ENCODE measurements at regions of chr19 and their contacts with region 1.

Region 1: DNA sequence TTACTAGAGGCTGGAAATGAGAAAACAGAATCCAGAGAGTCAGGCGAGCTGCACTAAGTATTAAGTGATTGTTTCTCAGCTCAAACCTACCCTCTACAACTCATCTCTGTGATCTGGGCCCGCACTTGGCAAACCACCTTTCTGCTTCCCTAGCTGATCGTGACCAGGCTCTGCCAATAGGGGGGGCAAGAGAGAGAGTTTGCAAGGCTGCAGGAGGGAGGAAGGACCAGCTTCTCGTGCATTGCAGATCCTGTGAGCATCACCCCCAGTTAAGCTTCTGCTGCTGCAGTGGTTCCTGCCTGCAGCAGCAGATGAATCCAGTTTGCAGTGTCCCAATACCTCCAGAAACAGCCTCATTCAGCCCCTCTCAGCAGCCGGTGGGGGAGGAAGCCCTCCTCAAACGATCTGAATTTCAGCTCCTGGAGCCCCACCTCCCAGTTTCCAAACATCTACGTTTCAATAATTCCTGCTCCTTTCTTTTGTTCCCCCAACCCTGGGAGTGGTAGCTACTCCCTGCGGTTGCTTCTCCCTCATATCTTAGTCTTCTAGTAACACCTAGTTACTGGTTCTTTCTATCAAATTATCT is 20.0 kb downstream of the XRCC1 start:
- DNase-seq: peak; percentile 90
- ATAC-seq: peak; percentile 98
- H3K4me3 Mint-ChIP-seq: no peak overlapping the region
- H3K27ac Mint-ChIP-seq: peak overlapping the region; percentile 13
- H3K4me1 Mint-ChIP-seq: peaks cover 14% of the 10 kb centered on the region
- H3K27me3 Mint-ChIP-seq: no peaks in the 10 kb centered on the region

Region 2: DNA sequence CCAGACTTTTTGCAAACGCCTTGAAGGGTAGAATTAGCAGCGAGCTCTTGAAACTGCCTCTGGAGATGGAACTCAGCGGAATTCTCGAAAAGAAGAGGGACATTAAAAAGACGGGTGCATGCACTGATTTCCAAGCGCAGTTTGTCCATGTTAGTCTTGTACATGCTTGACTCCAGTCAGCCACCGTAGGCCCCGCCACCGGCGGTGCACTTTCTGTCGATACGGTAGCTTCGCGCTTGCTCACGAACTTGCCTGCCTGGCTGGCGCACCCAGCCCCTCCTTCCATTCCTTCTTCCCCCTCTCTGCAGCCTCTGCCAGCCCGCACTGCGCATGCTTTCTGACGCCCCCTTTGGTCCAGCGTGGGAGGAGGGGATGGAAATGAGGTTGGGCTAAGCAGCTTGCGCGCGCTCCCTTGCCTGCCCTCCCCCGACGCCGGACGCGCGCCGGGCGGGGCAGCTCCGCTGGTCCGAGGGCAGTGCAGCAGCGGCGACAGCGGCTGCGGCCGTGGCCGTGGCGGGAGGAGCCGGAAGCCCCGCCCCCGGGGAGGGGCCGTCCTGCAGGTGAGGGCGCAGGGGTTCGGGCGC is 22.2 kb before region 1 on chr19 and contains the start of gene ZNF575:
- CTCF ChIA-PET with region 1: interaction called, 10 read pairs
- POLR2A ChIA-PET with region 1: interaction called, 6 read pairs
- intact Hi-C with region 1: no loop called
- DNase-seq: peak; percentile 95
- ATAC-seq: peak; percentile 57
- H3K4me3 Mint-ChIP-seq: peak within 1 kb of the TSS; percentile 83
- H3K27ac Mint-ChIP-seq: peak within 1 kb of the TSS; percentile 97
- H3K4me1 Mint-ChIP-seq: peaks cover 20% of the 10 kb centered on the region
- H3K27me3 Mint-ChIP-seq: no peaks in the 10 kb centered on the region
- total RNA-seq, gene ZNF575: 3.4 to 4.3 TPM

Region 3: DNA sequence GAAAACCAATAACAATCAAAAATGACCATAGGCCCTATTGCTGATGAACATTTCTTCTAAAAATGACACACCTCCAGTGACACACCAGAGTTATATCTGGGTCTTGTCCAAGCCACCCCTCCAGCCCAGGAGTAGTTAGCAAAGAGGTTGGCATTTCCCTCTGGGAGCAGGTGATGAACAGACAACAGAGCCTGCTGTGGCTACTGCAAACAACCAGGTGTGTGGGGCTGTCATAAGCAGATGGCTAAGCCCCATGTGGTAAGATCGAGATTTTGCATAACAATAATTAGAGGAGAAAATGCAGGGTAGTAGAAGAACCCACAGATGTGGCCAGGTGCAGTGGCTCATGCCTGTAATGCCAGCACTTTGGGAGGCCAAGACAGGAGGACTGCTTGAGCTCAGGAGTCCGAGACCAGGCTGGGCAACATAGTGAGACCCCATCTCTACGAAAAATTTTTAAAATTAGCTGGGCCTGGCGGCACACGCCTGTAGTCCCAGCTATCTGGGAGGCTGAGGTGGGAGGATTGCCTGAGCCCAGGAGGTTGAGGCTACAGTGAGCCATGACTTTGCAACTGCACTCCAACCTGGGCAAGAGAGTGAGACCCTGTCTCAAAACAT is 15.0 kb after region 1 on chr19:
- CTCF ChIA-PET with region 1: interaction called, 33 read pairs
- POLR2A ChIA-PET with region 1: no interaction called
- intact Hi-C with region 1: no loop called
- DNase-seq: no peak
- ATAC-seq: no peak
- H3K4me3 Mint-ChIP-seq: no peak overlapping the region
- H3K27ac Mint-ChIP-seq: no peak overlapping the region
- H3K4me1 Mint-ChIP-seq: peaks cover 26% of the 10 kb centered on the region
- H3K27me3 Mint-ChIP-seq: no peaks in the 10 kb centered on the region

Region 4: GRCh38 chr19:43575156-43575950 is 20.1 kb after region 1 on chr19 and contains the starts of genes PINLYP and XRCC1:
- CTCF ChIA-PET with region 1: interaction called, 33 read pairs
- POLR2A ChIA-PET with region 1: no interaction called
- intact Hi-C with region 1: no loop called
- DNase-seq: peak; percentile 99
- ATAC-seq: peak; percentile 99
- H3K4me3 Mint-ChIP-seq: peak within 1 kb of the TSS; percentile 87
- H3K27ac Mint-ChIP-seq: peak within 1 kb of the TSS; percentile 94
- H3K4me1 Mint-ChIP-seq: peaks cover 41% of the 10 kb centered on the region
- H3K27me3 Mint-ChIP-seq: no peaks in the 10 kb centered on the region
- total RNA-seq, gene PINLYP: 3.5 to 3.6 TPM
- total RNA-seq, gene XRCC1: 31.6 to 40.0 TPM

Region 5: DNA sequence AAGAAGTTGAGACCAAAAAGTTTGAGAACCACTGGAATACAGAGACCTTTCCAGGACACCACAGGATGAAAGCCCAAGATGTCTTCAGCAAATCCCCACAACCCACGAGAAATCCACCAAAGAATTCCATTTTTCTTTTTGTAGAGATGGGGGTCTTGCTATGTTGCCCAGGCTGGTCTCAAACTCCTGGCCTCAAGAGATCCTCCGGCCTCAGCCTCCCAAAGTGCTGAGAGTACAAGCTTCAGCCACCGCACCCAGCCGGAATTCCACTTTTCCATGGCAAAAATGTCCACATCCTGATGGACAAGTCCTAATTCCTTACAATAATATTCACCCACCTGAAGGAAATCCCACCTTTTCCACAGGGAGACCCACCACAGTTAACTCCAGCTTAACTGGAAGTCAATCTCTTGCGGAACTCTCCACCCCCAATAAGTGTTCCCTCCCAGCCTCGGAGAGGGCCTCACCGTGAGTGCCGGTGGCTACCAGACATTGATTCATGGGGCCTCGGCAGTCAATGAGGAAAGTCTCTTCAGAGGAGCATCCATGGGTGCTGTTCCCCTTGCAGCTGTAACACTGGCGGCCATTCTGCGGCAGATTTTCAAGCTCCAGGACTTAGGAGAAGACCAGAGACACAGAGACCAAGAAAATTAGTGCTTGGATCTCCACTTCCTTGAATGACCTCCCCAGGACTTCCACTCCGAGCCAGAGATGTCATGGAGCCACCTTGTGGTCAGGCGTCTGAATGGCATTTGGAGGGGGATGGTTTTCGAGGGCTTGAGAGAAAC is 96.7 kb after region 1 on chr19:
- CTCF ChIA-PET with region 1: interaction called, 4 read pairs
- POLR2A ChIA-PET with region 1: no interaction called
- intact Hi-C with region 1: loop called in 1 of 2 experiments (anchors 1 kb)
- DNase-seq: peak; percentile 66
- ATAC-seq: no peak
- H3K4me3 Mint-ChIP-seq: no peak overlapping the region
- H3K27ac Mint-ChIP-seq: no peak overlapping the region
- H3K4me1 Mint-ChIP-seq: no peaks in the 10 kb centered on the region
- H3K27me3 Mint-ChIP-seq: no peaks in the 10 kb centered on the region

Region 6: GRCh38 chr19:43809762-43810696 is 254.8 kb after region 1 on chr19:
- CTCF ChIA-PET with region 1: interaction called, 8 read pairs
- POLR2A ChIA-PET with region 1: no interaction called
- intact Hi-C with region 1: loop called in 1 of 2 experiments (anchors 10 kb)
- DNase-seq: no peak
- ATAC-seq: peak; percentile 83
- H3K4me3 Mint-ChIP-seq: no peak overlapping the region
- H3K27ac Mint-ChIP-seq: no peak overlapping the region
- H3K4me1 Mint-ChIP-seq: no peaks in the 10 kb centered on the region
- H3K27me3 Mint-ChIP-seq: peaks cover 8% of the 10 kb centered on the region